PC-9 (cell line): ENCODE measurements at regions of chr6 and their contacts with region 1.

Region 1: DNA sequence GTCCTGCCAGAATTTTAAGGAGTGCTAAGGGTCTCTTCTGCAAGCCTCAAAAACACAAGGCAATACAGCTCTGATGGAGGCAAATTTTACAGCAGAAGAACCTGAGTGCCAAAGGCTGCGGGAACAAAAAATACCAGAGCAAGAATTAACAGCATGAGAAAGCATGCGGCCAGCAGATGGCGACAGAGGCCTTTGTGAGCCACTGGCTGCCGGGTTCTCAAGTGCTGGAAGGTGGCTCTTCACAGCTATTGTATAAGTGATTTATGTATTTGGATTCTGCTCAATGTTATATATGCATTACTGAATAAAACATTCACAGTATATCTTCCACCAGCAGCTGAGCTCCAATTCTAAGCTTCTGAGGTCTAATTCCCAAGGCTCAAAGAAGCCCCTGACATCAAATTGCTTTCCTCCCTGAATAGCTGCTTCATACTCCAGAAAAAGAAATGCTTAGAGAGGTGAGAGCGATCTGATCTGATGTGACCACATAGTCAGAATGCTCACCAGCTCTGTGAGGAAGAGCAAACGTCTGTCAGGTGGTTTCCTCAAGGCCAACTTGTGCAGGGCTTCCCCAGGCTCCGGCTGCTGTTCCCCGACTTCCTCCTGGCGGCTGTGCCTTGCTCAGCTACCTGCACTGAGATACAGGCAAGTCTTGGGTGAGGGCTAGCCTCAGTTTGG is 58.6 kb downstream of the PPP1R3G start:
- DNase-seq: peak; percentile 46 to 77
- H3K4me3 ChIP-seq: no peak overlapping the region
- H3K27ac ChIP-seq: no peak overlapping the region
- H3K4me1 ChIP-seq: no peaks in the 10 kb centered on the region
- H3K27me3 ChIP-seq: no peaks in the 10 kb centered on the region
- CTCF ChIP-seq: peak; percentile 85

Region 2: GRCh38 chr6:5003604-5004372 is 140.0 kb before region 1 on chr6 and contains the start of gene RPP40:
- CTCF ChIA-PET with region 1: no interaction called
- POLR2A ChIA-PET with region 1: interaction called, 14 read pairs
- intact Hi-C with region 1: no loop called
- DNase-seq: peak; percentile 87 to 98
- H3K4me3 ChIP-seq: peak within 1 kb of the TSS; percentile 71
- H3K27ac ChIP-seq: peak within 1 kb of the TSS; percentile 76
- H3K4me1 ChIP-seq: no peaks in the 10 kb centered on the region
- H3K27me3 ChIP-seq: no peaks in the 10 kb centered on the region
- CTCF ChIP-seq: peak; percentile 77
- total RNA-seq, gene RPP40: 16.0 and 21.0 TPM in 2 replicates

Region 3: GRCh38 chr6:5125152-5126006 is 18.4 kb before region 1 on chr6:
- CTCF ChIA-PET with region 1: interaction called, 10 read pairs
- POLR2A ChIA-PET with region 1: no interaction called
- intact Hi-C with region 1: no loop called
- DNase-seq: peak; percentile 76 to 80
- H3K4me3 ChIP-seq: no peak overlapping the region
- H3K27ac ChIP-seq: no peak overlapping the region
- H3K4me1 ChIP-seq: peaks cover 18% of the 10 kb centered on the region
- H3K27me3 ChIP-seq: no peaks in the 10 kb centered on the region
- CTCF ChIP-seq: no peak

Region 4: DNA sequence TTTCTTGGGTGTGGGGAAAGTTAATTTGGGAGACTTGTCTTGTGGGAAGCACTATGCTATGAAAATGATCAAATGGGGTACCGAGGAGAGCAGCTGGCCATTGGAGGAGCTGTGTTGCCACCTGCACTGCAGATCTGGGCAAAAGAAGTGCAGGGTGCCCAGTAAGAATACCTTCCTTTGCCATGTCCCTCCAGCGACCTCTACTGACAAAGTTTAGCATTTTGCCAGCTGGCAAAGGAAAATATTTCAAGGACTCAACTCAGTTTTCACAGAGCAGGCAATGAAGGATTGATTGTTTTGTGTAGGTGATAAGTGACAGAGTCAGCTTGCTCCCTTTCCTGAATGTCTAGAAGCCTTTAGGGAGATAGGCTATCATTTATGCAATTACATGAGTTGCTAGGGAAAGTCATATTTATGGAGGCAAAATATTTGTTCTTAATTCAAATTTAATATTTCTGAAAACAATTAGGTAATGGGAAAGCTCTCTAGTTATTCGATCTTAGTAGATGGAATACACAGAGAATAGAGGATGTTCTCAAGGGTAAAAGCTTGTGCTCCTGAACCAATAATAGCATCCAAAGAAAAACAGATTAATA is 236.0 kb after region 1 on chr6:
- CTCF ChIA-PET with region 1: interaction called, 9 read pairs
- POLR2A ChIA-PET with region 1: no interaction called
- intact Hi-C with region 1: loop called (anchors 5 kb)
- DNase-seq: peak in 1 of 2 experiments; percentile 22
- H3K4me3 ChIP-seq: no peak overlapping the region
- H3K27ac ChIP-seq: no peak overlapping the region
- H3K4me1 ChIP-seq: no peaks in the 10 kb centered on the region
- H3K27me3 ChIP-seq: no peaks in the 10 kb centered on the region
- CTCF ChIP-seq: peak; percentile 72

Region 5: DNA sequence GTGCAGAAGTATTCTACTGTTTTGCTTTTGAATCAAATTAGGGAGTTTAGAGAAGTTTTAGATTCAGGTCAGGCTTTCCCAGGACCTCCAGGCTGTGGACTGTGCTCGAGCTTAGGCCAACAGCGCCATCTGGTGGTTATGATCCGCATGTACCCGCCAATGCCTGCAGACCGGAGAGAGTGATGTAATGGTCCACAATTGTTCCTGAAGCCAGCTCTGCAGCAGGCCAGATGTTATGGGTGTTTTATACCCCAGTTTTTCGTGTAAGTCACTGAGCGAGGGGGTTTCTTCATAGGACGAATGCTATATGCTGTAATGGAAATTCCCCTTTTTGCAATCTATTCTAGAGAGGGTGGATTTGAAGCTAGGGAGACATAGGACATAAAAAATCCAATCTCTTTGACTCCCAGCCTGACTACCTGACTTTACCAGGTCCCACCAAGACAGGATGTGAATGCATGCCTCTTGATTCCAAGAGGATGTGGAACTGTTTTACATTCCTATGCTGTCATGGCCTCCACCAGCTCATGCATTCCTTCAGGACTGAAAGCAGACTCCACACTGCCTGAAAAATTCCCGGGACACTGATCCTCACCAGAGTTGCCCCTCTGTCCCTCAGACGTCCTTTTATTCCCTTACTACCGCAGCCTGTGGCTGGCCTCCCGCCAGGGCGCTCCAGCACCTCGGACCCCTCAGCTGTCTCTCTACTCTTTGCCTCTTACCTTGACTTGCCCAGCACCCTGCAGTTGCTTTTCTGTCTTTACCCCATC is 1403.5 kb after region 1 on chr6:
- CTCF ChIA-PET with region 1: no interaction called
- POLR2A ChIA-PET with region 1: no interaction called
- intact Hi-C with region 1: loop called (anchors 2 kb)
- DNase-seq: peak; percentile 42 to 83
- H3K4me3 ChIP-seq: peak overlapping the region; percentile 0; the same call in 1 of the 2 replicates
- H3K27ac ChIP-seq: no peak overlapping the region
- H3K4me1 ChIP-seq: no peaks in the 10 kb centered on the region
- H3K27me3 ChIP-seq: peaks cover 13% of the 10 kb centered on the region
- CTCF ChIP-seq: peak; percentile 88